ENCODE measurements at regions of chr18 and their contacts with region 1.

Region 1: DNA sequence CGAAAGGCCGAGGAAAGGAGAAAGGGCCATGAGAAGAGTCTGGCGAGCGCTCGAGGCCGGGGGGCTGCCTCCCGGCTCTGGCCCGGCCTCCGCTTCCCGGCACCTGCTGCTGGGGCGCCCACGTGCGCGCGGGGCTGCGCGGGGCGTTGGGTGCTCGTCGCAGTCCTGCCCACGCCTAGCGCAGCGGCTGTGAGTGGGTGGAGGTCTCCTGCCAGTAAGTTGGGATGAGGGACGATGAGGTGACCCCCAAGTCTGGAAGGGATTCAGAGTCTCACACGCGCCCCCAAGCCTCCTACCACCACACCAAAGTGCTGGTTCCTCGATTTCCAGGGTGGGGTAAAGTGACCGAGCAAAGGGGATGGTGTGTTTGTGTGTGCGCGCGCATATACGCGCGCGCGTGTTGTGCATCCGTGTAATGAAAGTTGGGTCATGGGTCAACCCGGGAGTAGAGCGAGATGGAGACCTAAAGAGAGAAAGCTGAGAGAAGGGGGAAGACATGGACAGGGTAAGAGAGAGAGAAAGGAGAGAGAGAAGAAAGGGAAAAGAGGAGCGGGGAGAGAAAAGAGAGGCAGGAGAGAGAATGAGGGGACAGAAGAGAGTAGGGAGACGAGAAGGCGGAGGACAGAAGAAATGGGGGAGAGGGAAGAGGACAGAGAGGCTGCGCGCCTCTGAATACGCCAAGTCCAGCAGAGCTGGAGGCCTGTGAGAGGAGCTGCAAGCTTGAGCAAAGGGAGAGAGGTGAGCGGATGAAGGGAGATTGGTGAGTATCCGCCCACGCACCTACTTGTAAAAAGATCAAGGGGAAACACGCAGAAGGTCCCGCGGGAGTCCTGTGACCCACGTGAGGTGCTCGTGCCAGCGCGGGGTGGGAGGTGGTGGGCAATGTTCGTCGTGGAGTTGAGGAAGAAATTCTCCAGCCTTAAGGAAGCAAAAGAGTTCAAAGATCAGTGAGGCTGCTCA is 1.7 kb upstream of the NETO1 start:
- DNase-seq: no peak
- H3K4me3 ChIP-seq: no peak overlapping the region
- H3K27ac ChIP-seq: no peak overlapping the region
- H3K4me1 ChIP-seq: peaks cover 3% of the 10 kb centered on the region
- H3K27me3 ChIP-seq: no peaks in the 10 kb centered on the region
- CTCF ChIP-seq: no peak
- EP300 ChIP-seq: no peak
- POLR2A ChIP-seq: no peak

Region 2: DNA sequence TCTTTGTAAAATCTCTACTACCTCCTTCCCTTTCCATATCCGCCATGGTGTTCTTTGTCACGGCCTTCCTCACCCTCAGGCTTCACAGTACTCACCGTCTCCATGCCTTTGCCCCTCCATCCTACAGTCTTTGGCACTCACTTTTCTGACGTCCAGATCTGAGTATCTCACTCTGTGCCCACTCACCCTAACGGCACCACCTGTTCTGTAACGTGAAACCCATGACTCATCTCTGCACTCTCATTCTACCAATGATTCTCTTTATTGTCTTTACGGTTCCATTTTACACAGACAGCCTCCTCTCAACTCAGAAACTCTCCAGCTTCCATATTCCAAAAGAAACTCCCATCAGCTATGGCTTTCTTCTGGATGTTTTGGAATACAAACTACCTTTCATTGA is 58.5 kb before region 1 on chr18:
- intact Hi-C with region 1: loop called in 1 of 4 experiments (anchors 2 kb)
- DNase-seq: no peak
- H3K4me3 ChIP-seq: no peak overlapping the region
- H3K27ac ChIP-seq: no peak overlapping the region
- H3K4me1 ChIP-seq: no peaks in the 10 kb centered on the region
- H3K27me3 ChIP-seq: peaks cover 4% of the 10 kb centered on the region
- CTCF ChIP-seq: no peak
- EP300 ChIP-seq: no peak
- POLR2A ChIP-seq: no peak

Region 3: GRCh38 chr18:73124175-73124574 is 254.7 kb after region 1 on chr18:
- intact Hi-C with region 1: no loop called
- DNase-seq: no peak
- H3K4me3 ChIP-seq: no peak overlapping the region
- H3K27ac ChIP-seq: no peak overlapping the region
- H3K4me1 ChIP-seq: no peaks in the 10 kb centered on the region
- H3K27me3 ChIP-seq: no peaks in the 10 kb centered on the region
- CTCF ChIP-seq: no peak
- EP300 ChIP-seq: no peak
- POLR2A ChIP-seq: no peak

Measured in ovary (tissue), 10 donors.